Activated CD4-positive, alpha-beta memory T cell treated with anti-CD3 and anti-CD28 coated beads for 36 hours (primary cell): ENCODE measurements at regions of chr13 and their contacts with region 1.

Region 1: GRCh38 chr13:29508130-29508875 is 87.2 kb downstream of the SLC7A1 start:
- DNase-seq: peak; percentile 82
- H3K4me3 Mint-ChIP-seq: no peak overlapping the region
- H3K27ac Mint-ChIP-seq: no peak overlapping the region
- H3K4me1 Mint-ChIP-seq: no peaks in the 10 kb centered on the region
- H3K27me3 Mint-ChIP-seq: peaks cover 2% of the 10 kb centered on the region

Region 2: GRCh38 chr13:29464105-29464679 is 44.1 kb before region 1 on chr13:
- CTCF ChIA-PET with region 1: no interaction called
- POLR2A ChIA-PET with region 1: no interaction called
- intact Hi-C with region 1: no loop called
- DNase-seq: no peak
- H3K4me3 Mint-ChIP-seq: no peak overlapping the region
- H3K27ac Mint-ChIP-seq: no peak overlapping the region
- H3K4me1 Mint-ChIP-seq: no peaks in the 10 kb centered on the region
- H3K27me3 Mint-ChIP-seq: peaks cover 10% of the 10 kb centered on the region

Region 3: GRCh38 chr13:29486551-29486950 is 21.8 kb before region 1 on chr13:
- CTCF ChIA-PET with region 1: no interaction called
- POLR2A ChIA-PET with region 1: no interaction called
- intact Hi-C with region 1: no loop called
- DNase-seq: no peak
- H3K4me3 Mint-ChIP-seq: no peak overlapping the region
- H3K27ac Mint-ChIP-seq: no peak overlapping the region
- H3K4me1 Mint-ChIP-seq: no peaks in the 10 kb centered on the region
- H3K27me3 Mint-ChIP-seq: peaks cover 4% of the 10 kb centered on the region

Region 4: GRCh38 chr13:29587645-29588044 is 79.3 kb after region 1 on chr13:
- CTCF ChIA-PET with region 1: interaction called, 17 read pairs
- POLR2A ChIA-PET with region 1: no interaction called
- intact Hi-C with region 1: no loop called
- DNase-seq: no peak
- H3K4me3 Mint-ChIP-seq: no peak overlapping the region
- H3K27ac Mint-ChIP-seq: no peak overlapping the region
- H3K4me1 Mint-ChIP-seq: peaks cover 84% of the 10 kb centered on the region
- H3K27me3 Mint-ChIP-seq: no peaks in the 10 kb centered on the region

Region 5: DNA sequence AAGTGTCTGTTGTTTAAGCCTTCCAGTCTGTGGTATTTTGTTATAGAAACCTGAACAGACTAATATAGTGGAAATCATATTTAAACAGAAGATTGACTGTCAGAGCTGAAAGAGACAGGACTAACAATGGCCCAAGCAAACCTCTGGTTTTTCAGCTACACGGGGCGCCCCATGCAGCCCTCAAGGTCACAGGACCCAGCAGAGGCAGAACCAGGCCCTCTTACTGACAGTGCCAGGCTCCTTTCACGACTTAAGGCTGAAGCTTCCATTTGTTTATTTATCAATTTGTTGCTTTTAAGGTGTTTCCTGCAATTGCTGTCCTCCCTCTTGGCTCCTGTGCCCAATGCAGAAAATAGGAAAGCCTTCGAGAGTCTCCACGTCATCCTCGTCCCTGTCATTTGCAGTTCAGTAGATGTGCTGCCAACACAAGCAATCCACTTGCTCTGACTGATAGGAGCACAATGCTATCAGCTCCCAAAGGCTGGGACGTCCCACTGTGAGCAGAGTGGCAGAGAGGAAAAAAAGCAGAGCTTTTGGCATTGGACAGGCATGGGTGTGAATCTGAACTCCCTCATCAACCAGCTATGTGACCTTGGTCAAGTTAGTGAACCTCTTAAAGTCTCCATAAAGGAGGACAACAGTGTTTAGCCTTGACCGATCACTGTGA is 97.7 kb after region 1 on chr13:
- CTCF ChIA-PET with region 1: no interaction called
- POLR2A ChIA-PET with region 1: no interaction called
- intact Hi-C with region 1: no loop called
- DNase-seq: no peak
- H3K4me3 Mint-ChIP-seq: no peak overlapping the region
- H3K27ac Mint-ChIP-seq: no peak overlapping the region
- H3K4me1 Mint-ChIP-seq: no peaks in the 10 kb centered on the region
- H3K27me3 Mint-ChIP-seq: peaks cover 9% of the 10 kb centered on the region

Region 6: GRCh38 chr13:29696606-29697005 is 188.3 kb after region 1 on chr13:
- CTCF ChIA-PET with region 1: interaction called, 13 read pairs
- POLR2A ChIA-PET with region 1: no interaction called
- intact Hi-C with region 1: no loop called
- DNase-seq: no peak
- H3K4me3 Mint-ChIP-seq: no peak overlapping the region
- H3K27ac Mint-ChIP-seq: no peak overlapping the region
- H3K4me1 Mint-ChIP-seq: no peaks in the 10 kb centered on the region
- H3K27me3 Mint-ChIP-seq: peaks cover 18% of the 10 kb centered on the region

Region 7: GRCh38 chr13:29713839-29714238 is 205.5 kb after region 1 on chr13:
- CTCF ChIA-PET with region 1: interaction called, 86 read pairs
- POLR2A ChIA-PET with region 1: no interaction called
- intact Hi-C with region 1: no loop called
- DNase-seq: peak; percentile 15
- H3K4me3 Mint-ChIP-seq: no peak overlapping the region
- H3K27ac Mint-ChIP-seq: no peak overlapping the region
- H3K4me1 Mint-ChIP-seq: no peaks in the 10 kb centered on the region
- H3K27me3 Mint-ChIP-seq: peaks cover 8% of the 10 kb centered on the region